Brain microvascular endothelial cell (primary cell): ENCODE measurements at regions of chr11 and their contacts with region 1.

Region 1: GRCh38 chr11:68855205-68855981 is 13.7 kb upstream of the CPT1A start:
- DNase-seq: no peak
- H3K4me3 ChIP-seq: peak overlapping the region; percentile 48
- H3K27ac ChIP-seq: no peak overlapping the region
- H3K27me3 ChIP-seq: peaks cover 12% of the 10 kb centered on the region
- CTCF ChIP-seq: no peak

Region 2: DNA sequence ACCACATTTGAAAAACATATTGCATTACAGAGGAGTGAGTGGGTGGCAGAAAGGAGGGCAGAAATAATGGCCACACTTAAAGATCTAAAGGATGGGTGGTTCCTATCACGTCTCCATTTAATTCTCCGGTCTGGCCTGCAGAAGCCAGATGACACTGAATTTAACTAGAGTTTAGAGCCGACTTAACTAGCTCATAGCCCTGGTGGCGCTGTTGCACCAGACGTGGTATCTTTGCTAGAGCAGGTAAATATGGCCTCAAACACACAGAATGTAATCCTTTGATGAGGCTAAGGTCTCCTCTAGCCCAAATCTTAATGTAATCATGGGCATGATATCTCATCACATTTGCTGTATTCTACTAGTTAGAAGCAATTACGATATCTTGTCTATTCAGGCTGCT is 222.6 kb before region 1 on chr11:
- in situ Hi-C with region 1: loop called (anchors 25 kb)
- DNase-seq: peak; percentile 61
- H3K4me3 ChIP-seq: no peak overlapping the region
- H3K27ac ChIP-seq: no peak overlapping the region
- H3K27me3 ChIP-seq: peaks cover 5% of the 10 kb centered on the region
- CTCF ChIP-seq: peak; percentile 87